Activated CD4-positive, alpha-beta T cell treated with anti-CD3 and anti-CD28 coated beads, Interleukin-2, amount 10 ng/mL, durations not matched to agents 24 days and 14 days (primary cell): ENCODE measurements at regions of chr2 and their contacts with region 1.

Region 1: GRCh38 chr2:3959372-3959771 is 256.0 kb downstream of the DCDC2C start:
- DNase-seq: peak; percentile 56
- H3K4me3 Mint-ChIP-seq: no peak overlapping the region
- H3K27ac Mint-ChIP-seq: no peak overlapping the region
- H3K4me1 Mint-ChIP-seq: no peaks in the 10 kb centered on the region
- H3K27me3 Mint-ChIP-seq: no peaks in the 10 kb centered on the region

Region 2: DNA sequence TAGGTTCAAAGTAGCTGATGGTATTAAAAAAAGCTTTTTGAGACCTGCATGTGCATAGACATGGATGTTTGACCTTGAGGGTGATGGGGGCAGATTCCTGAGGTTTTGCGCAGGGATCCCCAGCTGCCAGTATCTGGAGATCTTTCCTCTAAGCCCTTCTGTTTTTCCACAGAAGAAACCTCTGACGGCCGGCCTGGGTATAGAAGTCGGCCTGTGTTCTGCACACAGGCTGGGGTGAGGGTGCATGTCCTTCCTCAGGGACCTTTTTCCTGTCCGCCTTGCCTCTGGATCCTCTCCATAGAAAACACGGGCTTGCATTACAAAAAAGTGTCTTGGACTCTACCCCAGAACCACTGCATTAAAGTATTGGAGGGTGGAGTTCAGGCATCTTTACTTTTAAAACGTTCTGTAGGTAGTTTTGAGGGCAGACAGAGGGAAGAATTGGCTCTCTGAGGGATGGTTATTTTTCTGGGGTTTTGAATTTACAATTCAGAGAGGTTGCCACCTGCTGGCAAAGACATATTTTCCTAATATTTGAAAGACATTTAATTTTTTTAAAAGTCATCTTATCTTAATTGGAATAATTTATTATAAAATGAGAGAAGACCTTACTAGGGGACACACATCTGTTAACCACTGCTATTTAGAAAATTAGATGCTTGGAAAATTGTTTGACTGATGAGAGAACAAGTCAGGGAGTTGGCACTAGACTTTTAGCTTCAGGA is 94.6 kb after region 1 on chr2:
- intact Hi-C with region 1: loop called (anchors 10 kb)
- DNase-seq: no peak
- H3K4me3 Mint-ChIP-seq: no peak overlapping the region
- H3K27ac Mint-ChIP-seq: no peak overlapping the region
- H3K4me1 Mint-ChIP-seq: peaks cover under 1% of the 10 kb centered on the region
- H3K27me3 Mint-ChIP-seq: peaks cover 3% of the 10 kb centered on the region

Region 3: GRCh38 chr2:4445821-4446220 is 486.4 kb after region 1 on chr2:
- intact Hi-C with region 1: no loop called
- DNase-seq: no peak
- H3K4me3 Mint-ChIP-seq: no peak overlapping the region
- H3K27ac Mint-ChIP-seq: no peak overlapping the region
- H3K4me1 Mint-ChIP-seq: no peaks in the 10 kb centered on the region
- H3K27me3 Mint-ChIP-seq: no peaks in the 10 kb centered on the region